Esophagus muscularis mucosa (tissue), 4 donors: ENCODE measurements at regions of chr2 and their contacts with region 1.

Region 1: DNA sequence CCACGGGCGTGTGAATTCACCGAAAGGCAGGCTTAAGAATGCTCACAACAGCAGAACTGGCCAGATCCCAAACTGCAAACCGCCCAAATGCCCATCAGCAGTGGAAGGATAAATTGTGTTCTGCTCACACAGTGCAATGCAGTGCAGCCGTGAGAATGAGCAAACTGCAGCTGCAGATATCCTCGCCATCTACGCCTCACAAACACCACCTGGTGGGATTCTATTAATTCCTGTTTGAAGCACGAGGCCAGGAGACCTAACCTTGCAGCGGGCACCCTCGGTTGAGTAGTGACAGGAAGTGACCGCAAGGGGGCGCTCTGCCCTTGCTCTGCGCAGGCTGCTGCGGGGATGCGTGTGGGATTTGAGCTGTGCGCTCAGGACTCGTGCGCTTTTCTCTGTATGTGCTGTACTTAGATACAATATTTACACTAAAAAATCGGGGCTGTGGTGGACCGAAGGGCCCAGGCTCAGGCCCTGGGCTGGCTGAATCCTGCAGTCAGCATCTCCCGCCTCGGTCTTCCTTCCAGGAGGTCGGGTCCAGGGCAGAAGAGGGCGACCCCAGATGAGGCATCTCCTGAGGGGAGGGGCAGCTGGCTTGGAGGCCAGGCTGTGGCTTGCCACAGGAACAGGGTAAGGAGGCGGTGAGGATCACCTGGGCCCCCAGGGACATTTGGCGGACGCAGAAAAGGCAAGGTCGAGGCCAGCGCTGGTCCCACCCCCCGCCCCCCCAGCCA is 19.8 kb upstream of the PDIA6 start:
- DNase-seq: no peak
- H3K4me3 ChIP-seq: no peak overlapping the region
- H3K27ac ChIP-seq: no peak overlapping the region
- H3K4me1 ChIP-seq: peaks cover 7 to 17% (median 15%) of the 10 kb centered on the region in 4 donors
- H3K27me3 ChIP-seq: peaks cover 0 to 68% (median 0%) of the 10 kb centered on the region in 4 donors
- CTCF ChIP-seq: peak; percentile 93 to 99 (median 93)
- EP300 ChIP-seq: no peak
- POLR2A ChIP-seq: no peak

Region 2: GRCh38 chr2:10911261-10912075 is 79.1 kb after region 1 on chr2 and contains the start of gene KCNF1:
- intact Hi-C with region 1: loop called (anchors 5 kb)
- DNase-seq: no peak
- H3K4me3 ChIP-seq: peak within 1 kb of the TSS; percentile 46 to 67 (median 55)
- H3K27ac ChIP-seq: peak within 1 kb of the TSS; percentile 56 to 66 (median 66)
- H3K4me1 ChIP-seq: peaks cover 0 to 37% (median 34%) of the 10 kb centered on the region in 4 donors
- H3K27me3 ChIP-seq: peaks cover 0 to 54% (median 7%) of the 10 kb centered on the region in 4 donors
- CTCF ChIP-seq: peak in 2 of 3 experiments; percentile 8 to 34
- EP300 ChIP-seq: no peak
- POLR2A ChIP-seq: no peak
- total RNA-seq, gene KCNF1: 20.2 to 51.7 (median 44.4) TPM